ENCODE measurements at regions of chr3 and their contacts with region 1.

Region 1: DNA sequence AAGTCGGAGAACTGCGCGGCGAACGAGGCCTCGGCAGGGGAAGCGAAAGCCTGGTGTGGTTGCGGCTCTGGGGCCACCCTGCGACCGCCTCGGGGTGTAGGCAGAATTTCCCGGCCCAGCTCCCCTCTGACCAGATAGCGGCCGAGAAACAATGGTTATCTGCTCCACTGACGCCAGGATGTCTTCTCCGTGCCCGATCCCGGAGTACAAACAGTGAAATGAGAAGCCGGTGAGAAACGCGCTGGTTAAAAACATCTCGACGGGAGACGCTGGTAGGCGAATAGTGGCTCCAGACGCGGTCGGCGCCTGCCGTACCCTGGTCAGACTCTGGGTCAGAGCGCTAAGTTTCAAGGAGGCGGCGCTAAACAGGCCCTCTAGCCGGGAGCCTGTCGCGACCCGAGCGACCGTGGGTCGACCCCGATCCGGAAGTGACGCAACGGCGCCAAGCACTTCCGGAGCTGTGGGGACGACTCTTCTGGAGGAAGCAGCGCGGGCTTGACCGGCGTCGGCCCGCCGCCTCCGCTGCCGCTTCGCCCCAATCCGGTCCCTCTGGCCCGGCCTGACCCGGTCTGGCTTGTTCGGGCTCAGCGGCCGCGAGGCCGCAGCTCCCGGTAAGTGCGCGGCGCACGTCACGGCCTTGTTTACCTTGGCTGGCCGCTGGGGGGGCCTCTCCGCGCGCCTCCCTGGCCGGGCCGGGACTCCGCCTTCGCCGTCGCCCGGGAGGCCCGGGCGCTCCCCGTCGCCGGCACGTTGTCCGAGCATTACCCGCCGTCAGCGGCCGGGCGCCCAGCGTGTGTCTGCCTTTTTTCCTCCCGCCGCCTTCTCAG is at the start of gene ARIH2:
- DNase-seq: peak; percentile 94
- ATAC-seq: peak; percentile 75
- H3K4me3 Mint-ChIP-seq: peak within 1 kb of the TSS; percentile 90
- H3K27ac Mint-ChIP-seq: peak within 1 kb of the TSS; percentile 100
- H3K4me1 Mint-ChIP-seq: peaks cover 30% of the 10 kb centered on the region
- H3K27me3 Mint-ChIP-seq: no peaks in the 10 kb centered on the region
- total RNA-seq, gene ARIH2: 105 to 112 TPM

Region 2: GRCh38 chr3:48472915-48473616 is 445.5 kb before region 1 on chr3:
- CTCF ChIA-PET with region 1: no interaction called
- POLR2A ChIA-PET with region 1: no interaction called
- intact Hi-C with region 1: loop called in 1 of 2 experiments (anchors 1 kb)
- DNase-seq: peak; percentile 99
- ATAC-seq: peak; percentile 90
- H3K4me3 Mint-ChIP-seq: peak overlapping the region; percentile 74
- H3K27ac Mint-ChIP-seq: peak overlapping the region; percentile 93
- H3K4me1 Mint-ChIP-seq: peaks cover 49% of the 10 kb centered on the region
- H3K27me3 Mint-ChIP-seq: no peaks in the 10 kb centered on the region

Region 3: DNA sequence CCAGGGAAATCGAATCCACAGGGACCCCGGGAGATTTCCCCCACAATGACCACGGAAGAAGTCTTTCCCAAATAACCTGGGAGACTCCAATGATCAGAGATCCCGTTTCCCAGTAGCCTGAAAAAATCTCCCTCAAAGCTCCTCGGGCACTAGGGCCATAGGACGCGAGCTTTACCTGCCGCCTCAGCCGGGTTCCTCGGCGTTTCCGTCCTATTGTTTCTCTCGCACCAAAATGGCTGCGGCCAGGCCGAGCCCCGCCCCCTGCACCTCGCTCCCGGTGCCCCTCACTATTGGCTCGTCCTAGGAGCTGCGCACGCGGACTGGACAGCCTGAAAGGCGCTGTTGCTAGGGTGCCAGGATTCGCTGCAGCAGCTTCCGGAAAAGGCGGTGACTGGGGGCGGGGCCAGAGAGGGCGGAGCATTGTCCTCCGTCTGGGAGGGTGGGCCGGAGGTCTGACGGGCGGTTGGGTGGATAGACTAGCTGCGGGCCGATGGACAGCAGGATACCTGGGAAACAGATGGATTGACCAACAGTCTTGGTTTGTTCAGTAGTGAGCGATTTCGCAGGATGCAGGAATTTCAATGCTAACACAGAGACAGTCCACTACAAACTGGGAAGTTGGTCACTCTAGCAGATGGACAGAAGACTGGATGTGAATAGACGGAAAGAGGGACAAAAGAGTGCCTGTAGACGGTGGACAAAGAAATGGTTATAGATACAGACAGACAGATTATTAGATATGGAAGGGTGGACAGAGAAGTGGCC is 201.4 kb before region 1 on chr3 and contains the start of gene IP6K2:
- CTCF ChIA-PET with region 1: no interaction called
- POLR2A ChIA-PET with region 1: no interaction called
- intact Hi-C with region 1: loop called in 1 of 2 experiments (anchors 1 kb)
- DNase-seq: peak; percentile 99
- ATAC-seq: peak; percentile 100
- H3K4me3 Mint-ChIP-seq: peak within 1 kb of the TSS; percentile 97
- H3K27ac Mint-ChIP-seq: peak within 1 kb of the TSS; percentile 97
- H3K4me1 Mint-ChIP-seq: peaks cover 31% of the 10 kb centered on the region
- H3K27me3 Mint-ChIP-seq: no peaks in the 10 kb centered on the region
- total RNA-seq, gene IP6K2: 39.4 to 48.3 TPM

Region 4: DNA sequence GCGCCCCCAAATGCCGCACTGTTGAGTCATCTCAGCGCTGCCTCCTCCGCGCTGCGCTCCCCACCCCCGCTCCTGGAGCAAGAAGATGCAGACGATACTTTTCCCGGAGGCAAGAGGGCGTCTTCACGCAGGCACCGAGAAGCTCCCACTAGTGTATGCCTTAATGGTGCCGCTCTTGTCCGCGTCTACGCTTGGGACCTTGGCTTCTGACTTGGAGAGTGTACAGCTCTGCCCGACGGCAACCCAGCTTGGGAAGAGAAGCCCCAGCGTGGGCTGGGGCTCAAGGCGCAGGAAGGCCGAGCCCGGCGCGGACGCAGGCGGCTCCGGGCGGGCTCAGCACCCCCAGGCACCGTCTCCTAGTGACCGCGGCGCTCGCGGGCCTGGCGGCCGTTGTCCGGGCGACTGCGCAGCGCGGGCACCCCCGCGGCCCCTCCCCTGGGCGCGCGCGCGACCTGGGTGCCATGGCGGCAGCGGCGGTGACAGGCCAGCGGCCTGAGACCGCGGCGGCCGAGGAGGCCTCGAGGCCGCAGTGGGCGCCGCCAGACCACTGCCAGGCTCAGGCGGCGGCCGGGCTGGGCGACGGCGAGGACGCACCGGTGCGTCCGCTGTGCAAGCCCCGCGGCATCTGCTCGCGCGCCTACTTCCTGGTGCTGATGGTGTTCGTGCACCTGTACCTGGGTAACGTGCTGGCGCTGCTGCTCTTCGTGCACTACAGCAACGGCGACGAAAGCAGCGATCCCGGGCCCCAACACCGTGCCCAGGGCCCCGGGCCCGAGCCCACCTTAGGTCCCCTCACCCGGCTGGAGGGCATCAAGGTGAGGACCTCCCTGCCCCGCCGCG is 71.4 kb after region 1 on chr3 and contains the start of gene P4HTM:
- CTCF ChIA-PET with region 1: interaction called, 4 read pairs
- POLR2A ChIA-PET with region 1: interaction called, 3 read pairs
- intact Hi-C with region 1: loop called in 1 of 2 experiments (anchors 1 kb)
- DNase-seq: peak; percentile 90
- ATAC-seq: peak; percentile 76
- H3K4me3 Mint-ChIP-seq: peak within 1 kb of the TSS; percentile 95
- H3K27ac Mint-ChIP-seq: peak within 1 kb of the TSS; percentile 93
- H3K4me1 Mint-ChIP-seq: peaks cover 35% of the 10 kb centered on the region
- H3K27me3 Mint-ChIP-seq: no peaks in the 10 kb centered on the region
- total RNA-seq, gene P4HTM: 25.7 to 30.4 TPM

Region 5: GRCh38 chr3:49165771-49166751 is 247.5 kb after region 1 on chr3 and contains the start of gene CCDC71:
- CTCF ChIA-PET with region 1: no interaction called
- POLR2A ChIA-PET with region 1: no interaction called
- intact Hi-C with region 1: loop called in 1 of 2 experiments (anchors 5 kb)
- DNase-seq: peak; percentile 88
- ATAC-seq: peak; percentile 81
- H3K4me3 Mint-ChIP-seq: peak within 1 kb of the TSS; percentile 90
- H3K27ac Mint-ChIP-seq: peak within 1 kb of the TSS; percentile 89
- H3K4me1 Mint-ChIP-seq: peaks cover 39% of the 10 kb centered on the region
- H3K27me3 Mint-ChIP-seq: no peaks in the 10 kb centered on the region
- total RNA-seq, gene CCDC71: 19.5 to 22.2 TPM

Measured in activated CD4-positive, alpha-beta T cell treated with anti-CD3 and anti-CD28 coated beads for 36 hours (primary cell).